B cell (primary cell): ENCODE measurements at regions of chr4 and their contacts with region 1.

Region 1: GRCh38 chr4:101790521-101791188 is at the start of gene BANK1:
- DNase-seq: peak; percentile 95
- ATAC-seq: peak; percentile 93
- H3K4me3 ChIP-seq: peak within 1 kb of the TSS; percentile 65 to 99 (median 83)
- H3K4me3 Mint-ChIP-seq: peak within 1 kb of the TSS; percentile 90
- H3K27ac ChIP-seq: peak within 1 kb of the TSS; percentile 91 to 95
- H3K27ac Mint-ChIP-seq: peak within 1 kb of the TSS; percentile 98
- H3K4me1 ChIP-seq: peaks cover 12 to 47% of the 10 kb centered on the region in 2 donors
- H3K4me1 Mint-ChIP-seq: peaks cover 53% of the 10 kb centered on the region
- H3K27me3 ChIP-seq: no peaks in the 10 kb centered on the region
- H3K27me3 Mint-ChIP-seq: no peaks in the 10 kb centered on the region
- CTCF ChIP-seq: peak; percentile 53
- total RNA-seq, gene BANK1: 354 and 368 TPM in 2 replicates

Region 2: GRCh38 chr4:101086801-101087586 is 703.7 kb before region 1 on chr4:
- CTCF ChIA-PET with region 1: no interaction called
- POLR2A ChIA-PET with region 1: no interaction called
- intact Hi-C with region 1: loop called (anchors 10 kb)
- DNase-seq: peak; percentile 23
- ATAC-seq: peak; percentile 18
- H3K4me3 ChIP-seq: no peak overlapping the region
- H3K4me3 Mint-ChIP-seq: no peak overlapping the region
- H3K27ac ChIP-seq: peak overlapping the region in 1 of 2 donors; percentile 33
- H3K27ac Mint-ChIP-seq: peak overlapping the region; percentile 54
- H3K4me1 ChIP-seq: peaks cover 24 to 29% of the 10 kb centered on the region in 2 donors
- H3K4me1 Mint-ChIP-seq: peaks cover 56% of the 10 kb centered on the region
- H3K27me3 ChIP-seq: no peaks in the 10 kb centered on the region
- H3K27me3 Mint-ChIP-seq: no peaks in the 10 kb centered on the region
- CTCF ChIP-seq: peak; percentile 10

Region 3: GRCh38 chr4:101693842-101694398 is 96.7 kb before region 1 on chr4:
- CTCF ChIA-PET with region 1: no interaction called
- POLR2A ChIA-PET with region 1: no interaction called
- intact Hi-C with region 1: loop called (anchors 5 kb)
- DNase-seq: peak; percentile 61
- ATAC-seq: peak; percentile 71
- H3K4me3 ChIP-seq: peak overlapping the region in 3 of 5 experiments; percentile 13 to 41 (median 16)
- H3K4me3 Mint-ChIP-seq: peak overlapping the region; percentile 79
- H3K27ac ChIP-seq: peak overlapping the region; percentile 59 to 65
- H3K27ac Mint-ChIP-seq: peak overlapping the region; percentile 87
- H3K4me1 ChIP-seq: peaks cover 39 to 41% of the 10 kb centered on the region in 2 donors
- H3K4me1 Mint-ChIP-seq: peaks cover 67% of the 10 kb centered on the region
- H3K27me3 ChIP-seq: no peaks in the 10 kb centered on the region
- H3K27me3 Mint-ChIP-seq: no peaks in the 10 kb centered on the region
- CTCF ChIP-seq: no peak

Region 4: GRCh38 chr4:101753721-101754120 is 36.9 kb before region 1 on chr4:
- CTCF ChIA-PET with region 1: no interaction called
- POLR2A ChIA-PET with region 1: no interaction called
- intact Hi-C with region 1: loop called (anchors 5 kb)
- DNase-seq: no peak
- ATAC-seq: no peak
- H3K4me3 ChIP-seq: no peak overlapping the region
- H3K4me3 Mint-ChIP-seq: no peak overlapping the region
- H3K27ac ChIP-seq: no peak overlapping the region
- H3K27ac Mint-ChIP-seq: no peak overlapping the region
- H3K4me1 ChIP-seq: no peaks in the 10 kb centered on the region
- H3K4me1 Mint-ChIP-seq: peaks cover 20% of the 10 kb centered on the region
- H3K27me3 ChIP-seq: no peaks in the 10 kb centered on the region
- H3K27me3 Mint-ChIP-seq: no peaks in the 10 kb centered on the region
- CTCF ChIP-seq: no peak

Region 5: GRCh38 chr4:101813604-101814003 is 22.9 kb after region 1 on chr4:
- CTCF ChIA-PET with region 1: interaction called, 11 read pairs
- POLR2A ChIA-PET with region 1: interaction called, 13 read pairs
- intact Hi-C with region 1: no loop called
- DNase-seq: peak; percentile 84
- ATAC-seq: peak; percentile 99
- H3K4me3 ChIP-seq: peak overlapping the region; percentile 39 to 88 (median 60)
- H3K4me3 Mint-ChIP-seq: peak overlapping the region; percentile 93
- H3K27ac ChIP-seq: peak overlapping the region; percentile 82 to 94
- H3K27ac Mint-ChIP-seq: peak overlapping the region; percentile 94
- H3K4me1 ChIP-seq: peaks cover 58 to 78% of the 10 kb centered on the region in 2 donors
- H3K4me1 Mint-ChIP-seq: peaks cover 75% of the 10 kb centered on the region
- H3K27me3 ChIP-seq: no peaks in the 10 kb centered on the region
- H3K27me3 Mint-ChIP-seq: no peaks in the 10 kb centered on the region
- CTCF ChIP-seq: no peak

Region 6: DNA sequence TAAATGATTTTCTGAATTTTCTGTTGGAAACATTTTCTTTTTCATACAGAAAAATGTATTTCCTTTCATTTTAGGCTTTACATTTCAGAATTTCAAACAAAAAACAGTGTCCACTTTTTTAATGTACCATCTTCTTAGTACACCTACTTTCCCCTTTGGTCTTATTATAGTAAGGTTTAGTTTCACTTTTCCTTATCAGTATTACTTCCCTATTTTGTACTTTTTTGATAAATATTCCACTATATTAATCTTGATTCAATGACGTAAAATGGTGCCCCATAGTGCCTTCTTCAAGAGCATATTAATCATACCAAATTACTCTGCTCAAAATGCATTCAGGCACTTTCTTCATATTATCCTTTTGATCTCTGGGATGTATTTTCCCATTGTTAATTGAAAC is 52.4 kb after region 1 on chr4:
- CTCF ChIA-PET with region 1: no interaction called
- POLR2A ChIA-PET with region 1: no interaction called
- intact Hi-C with region 1: loop called (anchors 5 kb)
- DNase-seq: peak; percentile 59
- ATAC-seq: peak; percentile 57
- H3K4me3 ChIP-seq: peak overlapping the region in 1 of 5 experiments; percentile 28
- H3K4me3 Mint-ChIP-seq: peak overlapping the region; percentile 50
- H3K27ac ChIP-seq: peak overlapping the region; percentile 37 to 82
- H3K27ac Mint-ChIP-seq: peak overlapping the region; percentile 59
- H3K4me1 ChIP-seq: peaks cover 29 to 35% of the 10 kb centered on the region in 2 donors
- H3K4me1 Mint-ChIP-seq: peaks cover 67% of the 10 kb centered on the region
- H3K27me3 ChIP-seq: no peaks in the 10 kb centered on the region
- H3K27me3 Mint-ChIP-seq: no peaks in the 10 kb centered on the region
- CTCF ChIP-seq: no peak